PC-3 (cell line): ENCODE measurements at regions of chr1 and their contacts with region 1.

Region 1: GRCh38 chr1:85628791-85629531 is 48.4 kb downstream of the CCN1 start:
- DNase-seq: peak; percentile 86
- ATAC-seq: peak; percentile 94
- H3K4me3 ChIP-seq: peak overlapping the region; percentile 47
- H3K27ac ChIP-seq: peak overlapping the region; percentile 97
- H3K4me1 ChIP-seq: peaks cover 34% of the 10 kb centered on the region
- H3K27me3 ChIP-seq: no peaks in the 10 kb centered on the region
- CTCF ChIP-seq: no peak

Region 2: GRCh38 chr1:85550784-85551516 is 78.0 kb before region 1 on chr1:
- CTCF ChIA-PET with region 1: no interaction called
- POLR2A ChIA-PET with region 1: no interaction called
- intact Hi-C with region 1: loop called (anchors 2 kb)
- DNase-seq: peak; percentile 97
- ATAC-seq: peak; percentile 93
- H3K4me3 ChIP-seq: peak overlapping the region; percentile 41
- H3K27ac ChIP-seq: peak overlapping the region; percentile 86
- H3K4me1 ChIP-seq: peaks cover 77% of the 10 kb centered on the region
- H3K27me3 ChIP-seq: no peaks in the 10 kb centered on the region
- CTCF ChIP-seq: no peak

Region 3: DNA sequence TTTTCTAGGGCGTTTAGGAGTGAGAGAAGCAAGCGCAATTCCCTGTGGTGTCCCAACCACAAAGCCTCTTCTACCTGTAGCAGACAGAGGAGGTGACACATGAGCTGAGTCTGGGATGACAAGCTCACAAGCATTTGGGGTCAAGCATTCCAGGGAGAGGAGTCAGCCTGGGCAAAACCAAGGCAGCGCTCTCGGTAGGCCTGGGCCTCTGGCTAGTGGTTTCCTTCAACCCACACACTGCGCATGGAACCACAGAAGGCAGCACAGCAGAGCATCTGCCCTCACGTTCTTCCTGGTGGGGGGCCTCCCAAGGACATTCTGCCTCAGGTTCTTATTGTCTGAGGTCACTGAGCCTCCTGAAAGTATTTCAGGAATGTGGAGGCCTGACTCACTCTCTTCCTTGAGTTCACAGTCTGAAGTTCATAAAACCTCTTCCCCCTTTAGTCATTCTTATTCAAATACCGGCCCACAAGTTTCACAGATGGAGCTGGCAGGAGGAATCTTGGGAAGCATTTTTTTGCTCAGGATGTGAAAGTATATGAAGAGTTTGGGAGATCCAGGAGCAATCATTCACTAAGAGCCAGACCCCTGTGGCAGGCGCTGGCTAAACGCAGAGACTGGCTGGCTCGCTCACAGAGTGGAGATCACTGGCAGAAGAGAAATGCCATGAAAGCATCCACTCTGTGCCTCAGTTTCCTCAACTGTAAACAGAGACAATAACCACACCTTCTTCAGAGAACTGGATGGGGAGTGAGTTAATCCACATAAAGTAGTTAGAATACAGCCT is 21.6 kb before region 1 on chr1:
- CTCF ChIA-PET with region 1: no interaction called
- POLR2A ChIA-PET with region 1: interaction called, 11 read pairs
- intact Hi-C with region 1: loop called (anchors 1 kb)
- DNase-seq: peak; percentile 99
- ATAC-seq: peak; percentile 84
- H3K4me3 ChIP-seq: no peak overlapping the region
- H3K27ac ChIP-seq: peak overlapping the region; percentile 85
- H3K4me1 ChIP-seq: peaks cover 58% of the 10 kb centered on the region
- H3K27me3 ChIP-seq: no peaks in the 10 kb centered on the region
- CTCF ChIP-seq: no peak

Region 4: DNA sequence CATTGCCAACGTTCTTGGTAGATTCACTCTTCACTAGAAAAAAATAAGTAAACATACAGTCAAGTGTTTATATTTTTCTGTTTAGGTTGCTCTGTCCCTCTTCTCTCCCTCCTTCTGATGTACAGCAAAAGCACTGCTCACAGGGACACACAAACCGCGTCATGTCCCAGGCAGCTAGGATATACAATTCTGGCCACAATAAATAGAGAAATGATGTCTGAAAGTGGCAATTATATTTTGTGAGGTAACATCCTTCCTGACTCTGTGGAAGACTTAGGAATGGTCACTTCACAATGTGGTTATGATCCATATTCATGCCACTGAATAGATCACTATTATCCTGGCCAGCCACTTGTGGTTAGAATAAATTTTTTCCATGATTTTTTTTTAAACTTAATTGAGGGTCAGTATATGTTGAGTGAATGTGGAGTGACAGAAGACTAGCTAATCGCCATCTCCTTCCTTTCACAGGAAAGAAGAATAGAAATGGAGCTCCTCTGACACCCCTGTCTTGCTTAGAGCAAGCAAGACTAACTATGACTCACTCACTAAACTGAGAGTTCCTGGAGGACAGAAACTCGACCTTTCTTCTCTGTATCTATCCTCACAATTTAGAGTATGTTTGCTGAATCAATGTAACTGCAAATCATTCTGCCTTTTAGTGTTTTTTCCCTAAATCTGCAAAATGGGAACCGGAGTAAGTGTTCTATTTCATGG is 25.3 kb after region 1 on chr1:
- CTCF ChIA-PET with region 1: no interaction called
- POLR2A ChIA-PET with region 1: interaction called, 8 read pairs
- intact Hi-C with region 1: loop called (anchors 2 kb)
- DNase-seq: peak; percentile 82
- ATAC-seq: peak; percentile 81
- H3K4me3 ChIP-seq: 0 out of 2 replicates have a peak overlapping the region, but pooled peaks have one; percentile 4
- H3K27ac ChIP-seq: peak overlapping the region; percentile 81
- H3K4me1 ChIP-seq: peaks cover 43% of the 10 kb centered on the region
- H3K27me3 ChIP-seq: no peaks in the 10 kb centered on the region
- CTCF ChIP-seq: no peak

Region 5: DNA sequence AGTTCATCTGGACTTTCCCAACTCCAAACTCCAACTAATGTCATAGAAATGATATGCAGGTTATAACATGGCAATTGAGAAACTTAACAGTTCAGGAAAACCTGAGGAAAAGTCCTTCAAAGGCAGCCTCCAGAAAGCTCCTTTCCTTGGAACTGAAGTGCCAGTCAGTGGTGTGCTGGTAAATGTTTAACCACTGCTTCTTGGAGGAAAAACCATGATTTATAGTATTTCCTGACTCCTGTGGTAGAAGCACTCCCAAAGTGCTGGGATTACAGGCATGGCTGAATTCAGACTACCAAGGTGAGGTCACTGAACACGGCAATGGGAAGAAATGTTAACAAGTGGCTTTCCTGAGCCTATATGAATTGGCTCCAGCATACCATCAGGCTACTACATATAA is 106.0 kb after region 1 on chr1:
- CTCF ChIA-PET with region 1: no interaction called
- POLR2A ChIA-PET with region 1: no interaction called
- intact Hi-C with region 1: no loop called
- DNase-seq: no peak
- ATAC-seq: no peak
- H3K4me3 ChIP-seq: no peak overlapping the region
- H3K27ac ChIP-seq: no peak overlapping the region
- H3K4me1 ChIP-seq: no peaks in the 10 kb centered on the region
- H3K27me3 ChIP-seq: no peaks in the 10 kb centered on the region
- CTCF ChIP-seq: no peak

Region 6: DNA sequence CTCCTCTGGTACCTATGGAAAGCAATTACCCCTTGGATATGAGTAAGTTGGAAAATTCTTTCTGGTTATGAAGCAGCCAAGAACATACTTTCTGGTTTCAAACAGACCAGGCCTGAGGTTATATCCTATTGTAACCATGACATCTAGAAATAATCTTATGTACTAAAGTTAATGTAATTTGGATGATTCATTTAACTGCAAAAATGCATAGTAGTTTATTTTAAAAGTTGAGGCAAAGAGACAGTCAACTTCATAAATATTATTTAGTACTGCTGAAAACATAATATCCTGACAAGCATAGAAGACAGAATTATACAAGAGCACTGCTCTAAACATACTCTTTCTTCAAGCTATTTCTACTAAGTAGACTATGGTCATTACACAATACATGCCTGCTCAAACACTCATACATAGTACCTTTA is 741.7 kb after region 1 on chr1:
- CTCF ChIA-PET with region 1: no interaction called
- POLR2A ChIA-PET with region 1: no interaction called
- intact Hi-C with region 1: no loop called
- DNase-seq: no peak
- ATAC-seq: no peak
- H3K4me3 ChIP-seq: no peak overlapping the region
- H3K27ac ChIP-seq: no peak overlapping the region
- H3K4me1 ChIP-seq: no peaks in the 10 kb centered on the region
- H3K27me3 ChIP-seq: no peaks in the 10 kb centered on the region
- CTCF ChIP-seq: no peak